Posterior cingulate gyrus (tissue), 11 donors: ENCODE measurements at regions of chr13 and their contacts with region 1.

Region 1: DNA sequence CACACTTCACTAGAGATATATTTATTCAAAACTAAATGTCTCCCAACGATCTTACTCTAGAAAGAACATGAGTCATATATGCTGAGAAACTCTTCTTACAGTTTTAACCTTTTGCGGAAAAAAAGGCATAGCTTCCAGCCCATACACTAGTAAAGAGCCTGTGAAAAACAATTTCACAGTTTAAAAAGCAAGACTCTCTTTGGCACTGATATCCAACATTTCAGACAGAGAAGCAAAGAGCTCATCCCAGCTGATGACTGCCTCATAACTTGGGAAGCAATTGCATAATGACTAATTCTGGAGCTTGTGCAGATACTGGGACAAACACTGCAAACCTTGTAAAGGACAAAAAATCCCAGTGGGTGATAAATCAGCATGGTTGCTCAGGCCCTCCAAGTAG is 88.0 kb downstream of the ENOX1 start:
- DNase-seq: no peak

Region 2: GRCh38 chr13:43303033-43303729 is 395.6 kb before region 1 on chr13:
- intact Hi-C with region 1: loop called (anchors 5 kb)
- DNase-seq: peak in 9 of 10 donors; percentile 50 to 94 (median 64)

Region 3: DNA sequence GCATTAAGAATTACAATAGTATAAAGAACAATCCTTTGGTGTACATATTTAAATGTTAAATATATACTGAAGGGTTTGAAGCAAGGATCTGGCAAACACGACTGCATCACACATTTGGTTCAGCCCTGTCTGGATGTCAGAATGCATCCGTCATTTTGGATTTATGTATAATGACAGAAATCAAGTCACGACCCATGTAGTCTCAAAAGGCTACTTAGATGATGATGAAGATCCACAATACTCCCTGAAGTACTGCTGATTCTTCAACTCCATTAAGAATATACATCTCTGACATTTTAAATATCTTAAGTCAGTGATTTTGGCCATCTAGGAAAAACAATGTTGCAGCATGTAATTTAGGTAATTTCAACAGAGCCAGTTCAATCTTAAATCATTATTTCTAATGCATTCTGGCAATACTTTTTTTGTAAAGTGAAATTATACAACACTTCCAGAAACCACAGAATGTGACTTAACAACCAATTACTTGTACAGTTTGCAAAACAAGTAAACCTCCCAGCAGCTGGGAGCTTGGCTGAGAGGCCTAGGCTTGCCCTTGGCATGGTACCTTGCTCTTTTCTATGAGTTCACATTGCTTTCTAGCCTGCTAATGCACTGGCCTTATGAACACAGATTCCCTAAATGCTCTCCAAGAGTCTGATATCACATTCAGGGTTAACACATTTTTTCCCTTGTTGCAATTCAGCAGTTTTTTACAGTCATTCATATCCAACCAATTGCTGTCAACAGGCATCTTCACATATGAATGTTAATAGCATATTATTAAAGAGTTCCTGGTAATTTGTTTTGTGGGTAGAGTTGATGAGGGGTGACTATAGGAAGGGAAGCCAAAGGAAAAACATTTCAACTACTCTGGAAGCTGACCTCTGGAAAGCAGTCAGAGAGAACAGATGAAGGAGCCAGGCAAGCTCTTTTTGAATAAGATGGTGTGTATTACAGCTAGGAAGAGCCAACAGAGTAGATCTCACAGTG is 87.2 kb before region 1 on chr13:
- intact Hi-C with region 1: loop called (anchors 10 kb)
- DNase-seq: no peak